AG04449 (cell line): ENCODE measurements at regions of chr9 and their contacts with region 1.

Region 1: DNA sequence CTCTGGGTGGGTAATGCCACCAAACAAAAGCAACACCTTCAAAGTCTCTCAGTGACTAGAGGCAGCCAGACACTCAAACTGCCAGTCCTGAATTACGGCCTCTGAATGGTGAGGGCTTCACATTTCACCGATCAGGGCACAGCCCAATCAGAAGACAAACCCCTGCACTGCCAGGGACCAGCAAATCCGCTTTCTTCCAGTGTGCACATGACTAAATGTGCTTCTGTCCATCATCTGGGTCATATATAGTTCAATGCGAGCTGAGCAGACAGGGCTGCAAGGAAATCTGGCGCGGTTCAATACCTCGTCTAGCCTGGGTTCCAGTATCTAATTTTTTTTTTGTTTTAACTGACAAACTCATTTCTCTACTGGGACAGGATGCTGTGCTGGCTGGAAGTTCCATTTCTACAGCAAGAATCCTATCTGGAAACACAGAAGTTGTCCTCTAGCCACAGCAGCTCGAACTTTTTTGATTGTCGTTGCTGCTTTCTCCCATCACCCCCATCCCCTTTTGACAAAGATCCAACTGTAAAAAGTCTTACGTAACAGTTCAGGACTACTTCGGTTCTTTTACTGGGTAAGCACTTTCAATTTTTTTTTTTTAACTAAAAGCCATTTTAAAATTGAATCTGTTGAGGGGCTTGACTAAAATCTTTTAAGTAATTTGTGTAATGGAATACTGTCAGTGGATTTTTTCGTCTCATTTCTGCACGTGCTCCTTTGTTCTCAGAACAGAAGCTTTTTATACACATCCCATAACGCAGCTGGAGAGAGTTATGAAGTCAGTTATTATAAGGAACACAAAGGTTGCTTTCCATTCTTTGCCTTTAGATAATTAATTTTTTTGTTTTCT is 112.7 kb downstream of the NR6A1 start:
- DNase-seq: peak; percentile 97
- H3K4me3 ChIP-seq: peak overlapping the region; percentile 67
- CTCF ChIP-seq: no peak

Region 2: GRCh38 chr9:124629600-124629999 is 28.8 kb before region 1 on chr9:
- CTCF ChIA-PET with region 1: interaction called, 6 read pairs
- POLR2A ChIA-PET with region 1: interaction called, 17 read pairs
- DNase-seq: no peak
- H3K4me3 ChIP-seq: no peak overlapping the region
- CTCF ChIP-seq: no peak

Region 3: GRCh38 chr9:124635285-124635684 is 23.1 kb before region 1 on chr9:
- CTCF ChIA-PET with region 1: no interaction called
- POLR2A ChIA-PET with region 1: interaction called, 17 read pairs
- DNase-seq: no peak
- H3K4me3 ChIP-seq: no peak overlapping the region
- CTCF ChIP-seq: no peak